MCF 10A (cell line): ENCODE measurements at regions of chr1 and their contacts with region 1.

Region 1: GRCh38 chr1:91732291-91733107 is 153.5 kb downstream of the TGFBR3 start:
- DNase-seq: peak; percentile 85
- H3K4me3 Mint-ChIP-seq: peak overlapping the region; percentile 47
- H3K27ac Mint-ChIP-seq: peak overlapping the region; percentile 79
- H3K4me1 Mint-ChIP-seq: peaks cover 55% of the 10 kb centered on the region
- H3K27me3 Mint-ChIP-seq: no peaks in the 10 kb centered on the region
- CTCF ChIP-seq: no peak

Region 2: GRCh38 chr1:91529856-91530255 is 202.6 kb before region 1 on chr1:
- CTCF ChIA-PET with region 1: interaction called, 17 read pairs
- POLR2A ChIA-PET with region 1: interaction called, 12 read pairs
- intact Hi-C with region 1: loop called (anchors 2 kb)
- DNase-seq: peak; percentile 67
- H3K4me3 Mint-ChIP-seq: no peak overlapping the region
- H3K27ac Mint-ChIP-seq: peak overlapping the region; percentile 70
- H3K4me1 Mint-ChIP-seq: peaks cover 14% of the 10 kb centered on the region
- H3K27me3 Mint-ChIP-seq: no peaks in the 10 kb centered on the region
- CTCF ChIP-seq: peak; percentile 60

Region 3: DNA sequence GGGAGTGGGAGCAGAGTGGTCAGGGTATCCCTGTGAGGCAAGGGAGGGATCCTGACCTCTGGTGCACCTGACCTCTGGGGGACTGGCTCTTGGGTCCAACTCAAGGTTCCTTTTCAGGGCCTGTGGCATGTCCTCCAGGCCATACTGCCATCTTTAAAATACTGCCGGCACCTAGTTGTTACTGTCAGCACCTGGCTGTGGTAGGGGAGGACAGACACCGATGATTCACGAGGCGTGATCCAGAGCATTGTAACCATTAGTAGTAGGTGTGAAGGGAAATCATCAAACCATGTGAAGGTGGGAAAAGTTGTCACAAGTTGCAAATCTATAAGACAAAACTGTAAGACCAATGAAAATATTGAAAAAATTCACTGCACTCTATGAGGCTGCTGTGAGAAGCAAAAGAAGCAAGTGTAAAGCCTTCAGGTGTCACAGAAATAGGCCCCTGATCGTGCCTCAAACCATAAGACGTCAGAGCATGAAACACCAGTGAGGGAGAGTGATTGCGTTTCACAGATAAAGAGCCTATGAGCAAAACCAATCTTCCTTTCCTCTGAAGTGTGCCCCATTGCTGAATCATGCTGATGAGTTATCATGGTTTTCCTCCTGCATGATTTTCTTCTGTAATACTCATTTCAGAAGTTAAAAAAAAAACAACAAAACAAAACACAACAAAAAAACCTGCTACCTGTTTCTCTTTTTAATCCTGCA is 176.5 kb before region 1 on chr1:
- CTCF ChIA-PET with region 1: interaction called, 3 read pairs
- POLR2A ChIA-PET with region 1: interaction called, 4 read pairs
- intact Hi-C with region 1: loop called (anchors 5 kb)
- DNase-seq: peak; percentile 25
- H3K4me3 Mint-ChIP-seq: no peak overlapping the region
- H3K27ac Mint-ChIP-seq: peak overlapping the region; percentile 84
- H3K4me1 Mint-ChIP-seq: peaks cover 45% of the 10 kb centered on the region
- H3K27me3 Mint-ChIP-seq: no peaks in the 10 kb centered on the region
- CTCF ChIP-seq: no peak

Region 4: DNA sequence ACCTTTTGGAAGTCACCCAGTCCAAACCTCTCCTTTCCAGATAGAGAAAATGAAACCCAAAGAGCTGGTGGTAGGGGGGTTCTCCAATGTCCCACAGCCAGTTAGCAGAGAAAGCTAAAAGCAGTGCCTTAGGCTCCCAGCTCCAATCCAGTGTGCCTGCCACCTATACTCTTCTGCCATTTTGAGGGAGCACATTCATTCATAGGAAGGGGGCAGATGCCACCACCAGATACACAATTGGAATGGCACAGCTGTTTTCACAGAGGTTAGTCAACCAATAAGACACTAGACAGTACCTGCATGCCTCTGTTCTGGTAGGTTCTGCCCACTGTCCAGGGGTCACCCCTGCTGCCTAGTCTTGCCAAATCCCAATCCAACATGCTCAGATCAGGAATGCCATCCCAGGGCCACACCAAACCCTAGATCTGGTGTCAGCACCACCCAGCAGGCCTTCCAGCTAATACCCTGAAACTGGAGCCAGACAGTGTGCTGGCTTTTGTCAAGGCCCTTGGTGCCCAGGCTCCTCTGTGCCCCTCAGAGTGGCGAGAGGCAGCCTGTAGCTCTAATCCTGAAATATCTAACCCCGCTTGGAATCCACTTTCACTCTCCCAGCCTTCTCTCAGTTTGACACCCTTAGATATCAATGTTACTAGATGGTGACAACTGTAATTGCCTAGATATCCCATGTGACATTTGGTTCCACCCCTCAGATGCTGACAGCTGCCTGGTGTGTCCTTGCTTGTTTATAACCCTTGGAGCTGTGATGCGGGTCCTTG is 25.2 kb before region 1 on chr1:
- CTCF ChIA-PET with region 1: no interaction called
- POLR2A ChIA-PET with region 1: no interaction called
- intact Hi-C with region 1: no loop called
- DNase-seq: no peak
- H3K4me3 Mint-ChIP-seq: no peak overlapping the region
- H3K27ac Mint-ChIP-seq: no peak overlapping the region
- H3K4me1 Mint-ChIP-seq: no peaks in the 10 kb centered on the region
- H3K27me3 Mint-ChIP-seq: no peaks in the 10 kb centered on the region
- CTCF ChIP-seq: no peak

Region 5: GRCh38 chr1:91742848-91743292 is 10.4 kb after region 1 on chr1:
- CTCF ChIA-PET with region 1: interaction called, 6 read pairs
- POLR2A ChIA-PET with region 1: interaction called, 20 read pairs
- intact Hi-C with region 1: no loop called
- DNase-seq: peak; percentile 87
- H3K4me3 Mint-ChIP-seq: no peak overlapping the region
- H3K27ac Mint-ChIP-seq: peak overlapping the region; percentile 84
- H3K4me1 Mint-ChIP-seq: peaks cover 47% of the 10 kb centered on the region
- H3K27me3 Mint-ChIP-seq: no peaks in the 10 kb centered on the region
- CTCF ChIP-seq: no peak

Region 6: DNA sequence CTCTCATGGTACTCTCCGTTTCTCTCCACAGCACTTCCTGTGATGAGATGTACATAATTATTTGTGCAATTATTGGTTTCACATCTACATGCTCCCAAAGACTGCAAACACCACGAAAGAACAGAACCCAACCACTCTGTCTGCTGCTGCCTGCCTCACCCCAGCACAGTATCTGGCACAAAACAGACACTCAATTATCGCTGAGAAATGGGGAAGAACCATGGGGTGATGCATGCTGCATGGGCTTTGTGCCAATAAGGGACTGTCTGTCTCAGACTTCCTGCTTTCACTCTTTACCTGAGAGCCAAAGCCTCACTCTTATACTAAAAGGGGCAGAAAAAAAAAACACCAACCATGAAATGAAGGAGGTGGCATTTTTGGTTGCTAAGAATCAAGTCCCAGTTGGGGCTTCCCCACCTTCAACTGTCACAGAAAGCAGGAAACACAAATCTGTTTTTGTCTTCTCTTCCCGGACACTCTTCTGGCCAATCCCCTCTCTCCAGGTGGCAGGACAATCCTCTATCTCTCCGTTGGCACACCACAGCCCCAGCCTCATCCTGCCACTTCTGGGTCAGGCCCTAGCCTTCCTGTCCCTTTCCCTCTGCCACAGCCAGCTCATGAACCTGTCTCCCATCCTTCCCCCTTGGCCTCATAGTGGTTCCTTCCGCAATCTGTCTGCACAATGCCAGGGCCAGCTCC is 71.5 kb after region 1 on chr1:
- CTCF ChIA-PET with region 1: interaction called, 8 read pairs
- POLR2A ChIA-PET with region 1: interaction called, 8 read pairs
- intact Hi-C with region 1: loop called (anchors 5 kb)
- DNase-seq: peak; percentile 78
- H3K4me3 Mint-ChIP-seq: peak overlapping the region; percentile 54
- H3K27ac Mint-ChIP-seq: peak overlapping the region; percentile 88
- H3K4me1 Mint-ChIP-seq: peaks cover 73% of the 10 kb centered on the region
- H3K27me3 Mint-ChIP-seq: no peaks in the 10 kb centered on the region
- CTCF ChIP-seq: no peak